ENCODE measurements at regions of chrX and their contacts with region 1.

Region 1: DNA sequence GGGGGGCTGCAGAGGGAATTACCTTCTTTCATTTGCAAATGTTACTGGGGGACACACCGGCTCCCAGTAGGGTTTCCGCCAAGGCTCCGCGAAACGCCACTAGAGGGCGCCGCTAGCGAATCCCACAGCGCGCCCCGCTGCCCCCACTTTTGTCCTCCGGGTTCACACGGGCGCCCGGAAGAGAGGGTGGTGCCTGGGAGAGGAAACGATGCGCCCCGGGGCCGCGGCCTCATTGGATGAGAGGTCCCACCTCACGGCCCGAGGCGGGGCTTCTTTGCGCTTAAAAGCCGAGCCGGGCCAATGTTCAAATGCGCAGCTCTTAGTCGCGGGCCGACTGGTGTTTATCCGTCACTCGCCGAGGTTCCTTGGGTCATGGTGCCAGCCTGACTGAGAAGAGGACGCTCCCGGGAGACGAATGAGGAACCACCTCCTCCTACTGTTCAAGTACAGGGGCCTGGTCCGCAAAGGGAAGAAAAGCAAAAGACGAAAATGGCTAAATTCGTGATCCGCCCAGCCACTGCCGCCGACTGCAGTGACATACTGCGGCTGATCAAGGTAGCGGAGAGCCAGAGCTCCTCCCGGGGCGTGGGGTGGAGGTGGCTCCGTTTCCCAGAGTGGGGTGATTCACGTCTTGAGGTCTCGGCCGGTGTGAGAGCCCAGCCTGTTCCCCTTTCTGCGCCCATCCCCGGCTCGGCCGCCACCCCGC is at the start of gene SAT1:
- DNase-seq: peak; percentile 94 to 95
- H3K4me3 ChIP-seq: peak within 1 kb of the TSS; percentile 80
- H3K4me3 Mint-ChIP-seq: peak within 1 kb of the TSS; percentile 92
- H3K27ac Mint-ChIP-seq: peak within 1 kb of the TSS; percentile 83
- H3K4me1 ChIP-seq: peaks cover 4% of the 10 kb centered on the region; the same call in 1 of the 2 replicates
- H3K4me1 Mint-ChIP-seq: no peaks in the 10 kb centered on the region
- H3K27me3 ChIP-seq: no peaks in the 10 kb centered on the region
- H3K27me3 Mint-ChIP-seq: no peaks in the 10 kb centered on the region
- CTCF ChIP-seq: peak; percentile 69 to 76
- total RNA-seq, gene SAT1: 151 and 155 TPM in 2 replicates

Region 2: DNA sequence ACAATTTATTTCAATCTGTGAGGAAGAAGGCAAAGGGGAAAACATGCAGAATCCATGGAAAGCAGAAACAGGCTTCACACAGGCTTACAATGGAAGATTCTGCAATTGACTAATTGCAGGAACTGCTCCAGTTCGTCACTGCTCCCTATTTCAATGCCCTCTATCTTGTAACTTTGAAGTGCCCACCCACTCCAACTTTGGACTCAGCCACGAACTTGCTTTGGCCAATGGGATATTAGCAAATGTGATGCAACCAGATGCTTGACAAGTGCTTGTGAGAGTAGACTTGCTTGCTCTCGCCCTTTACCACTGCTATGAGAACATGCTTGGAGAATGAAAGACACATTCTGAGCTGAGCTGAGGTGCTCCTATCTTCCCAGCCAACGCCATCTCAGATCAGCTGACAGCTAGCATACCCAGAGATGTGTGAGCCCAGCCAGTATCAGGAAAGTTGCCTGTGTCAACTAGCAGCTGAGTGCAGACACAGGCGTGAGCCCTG is 554.0 kb before region 1 on chrX:
- CTCF ChIA-PET with region 1: no interaction called
- POLR2A ChIA-PET with region 1: no interaction called
- intact Hi-C with region 1: no loop called
- DNase-seq: no peak
- H3K4me3 ChIP-seq: no peak overlapping the region
- H3K4me3 Mint-ChIP-seq: no peak overlapping the region
- H3K27ac Mint-ChIP-seq: no peak overlapping the region
- H3K4me1 ChIP-seq: no peaks in the 10 kb centered on the region
- H3K4me1 Mint-ChIP-seq: no peaks in the 10 kb centered on the region
- H3K27me3 ChIP-seq: no peaks in the 10 kb centered on the region
- H3K27me3 Mint-ChIP-seq: peaks cover 8% of the 10 kb centered on the region
- CTCF ChIP-seq: no peak

Region 3: GRCh38 chrX:23694606-23695005 is 88.4 kb before region 1 on chrX:
- CTCF ChIA-PET with region 1: interaction called, 3 read pairs
- POLR2A ChIA-PET with region 1: interaction called, 4 read pairs
- intact Hi-C with region 1: loop called (anchors 2 kb)
- DNase-seq: peak; percentile 35 to 41
- H3K4me3 ChIP-seq: no peak overlapping the region
- H3K4me3 Mint-ChIP-seq: no peak overlapping the region
- H3K27ac Mint-ChIP-seq: no peak overlapping the region
- H3K4me1 ChIP-seq: no peaks in the 10 kb centered on the region
- H3K4me1 Mint-ChIP-seq: no peaks in the 10 kb centered on the region
- H3K27me3 ChIP-seq: no peaks in the 10 kb centered on the region
- H3K27me3 Mint-ChIP-seq: no peaks in the 10 kb centered on the region
- CTCF ChIP-seq: peak; percentile 45 to 54

Region 4: GRCh38 chrX:23736030-23736429 is 47.0 kb before region 1 on chrX:
- CTCF ChIA-PET with region 1: no interaction called
- POLR2A ChIA-PET with region 1: no interaction called
- intact Hi-C with region 1: no loop called
- DNase-seq: no peak
- H3K4me3 ChIP-seq: no peak overlapping the region
- H3K4me3 Mint-ChIP-seq: no peak overlapping the region
- H3K27ac Mint-ChIP-seq: no peak overlapping the region
- H3K4me1 ChIP-seq: no peaks in the 10 kb centered on the region
- H3K4me1 Mint-ChIP-seq: no peaks in the 10 kb centered on the region
- H3K27me3 ChIP-seq: no peaks in the 10 kb centered on the region
- H3K27me3 Mint-ChIP-seq: no peaks in the 10 kb centered on the region
- CTCF ChIP-seq: no peak

Region 5: DNA sequence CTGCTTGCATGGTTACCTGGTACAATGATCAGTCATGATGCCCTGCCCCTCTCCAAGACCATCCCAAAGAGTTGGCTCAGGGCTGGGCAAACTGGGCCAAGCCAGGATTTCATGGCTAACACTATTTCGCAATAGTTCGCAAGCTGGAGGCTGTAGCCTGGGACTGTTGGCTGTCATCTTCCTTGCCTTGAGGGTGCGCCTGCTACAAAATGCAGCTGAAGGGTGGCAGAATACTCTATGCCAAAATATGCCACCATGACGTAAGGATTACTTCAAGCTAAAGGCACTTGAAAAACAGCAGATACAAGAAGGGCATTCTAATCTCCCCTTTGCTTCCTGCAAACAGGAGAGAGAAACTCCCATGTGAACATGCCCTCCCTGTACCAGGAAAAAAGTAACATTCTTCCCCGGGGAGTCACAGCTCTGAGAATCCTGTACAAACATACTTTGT is 20.9 kb after region 1 on chrX:
- CTCF ChIA-PET with region 1: interaction called, 7 read pairs
- POLR2A ChIA-PET with region 1: interaction called, 32 read pairs
- intact Hi-C with region 1: loop called (anchors 1 kb)
- DNase-seq: peak; percentile 47 to 48
- H3K4me3 ChIP-seq: no peak overlapping the region
- H3K4me3 Mint-ChIP-seq: peak overlapping the region; percentile 38
- H3K27ac Mint-ChIP-seq: peak overlapping the region; percentile 90
- H3K4me1 ChIP-seq: peaks cover 27% of the 10 kb centered on the region
- H3K4me1 Mint-ChIP-seq: peaks cover 28% of the 10 kb centered on the region
- H3K27me3 ChIP-seq: no peaks in the 10 kb centered on the region
- H3K27me3 Mint-ChIP-seq: no peaks in the 10 kb centered on the region
- CTCF ChIP-seq: no peak

Region 6: GRCh38 chrX:23844502-23845138 is 61.6 kb after region 1 on chrX:
- CTCF ChIA-PET with region 1: no interaction called
- POLR2A ChIA-PET with region 1: interaction called, 3 read pairs
- intact Hi-C with region 1: loop called (anchors 1 kb)
- DNase-seq: peak; percentile 52 to 57
- H3K4me3 ChIP-seq: no peak overlapping the region
- H3K4me3 Mint-ChIP-seq: peak overlapping the region; percentile 66
- H3K27ac Mint-ChIP-seq: peak overlapping the region; percentile 85
- H3K4me1 ChIP-seq: peaks cover 17% of the 10 kb centered on the region
- H3K4me1 Mint-ChIP-seq: peaks cover 6% of the 10 kb centered on the region
- H3K27me3 ChIP-seq: no peaks in the 10 kb centered on the region
- H3K27me3 Mint-ChIP-seq: no peaks in the 10 kb centered on the region
- CTCF ChIP-seq: no peak

Region 7: GRCh38 chrX:23854945-23855344 is 71.9 kb after region 1 on chrX:
- CTCF ChIA-PET with region 1: no interaction called
- POLR2A ChIA-PET with region 1: interaction called, 3 read pairs
- intact Hi-C with region 1: loop called (anchors 5 kb)
- DNase-seq: no peak
- H3K4me3 ChIP-seq: no peak overlapping the region
- H3K4me3 Mint-ChIP-seq: no peak overlapping the region
- H3K27ac Mint-ChIP-seq: no peak overlapping the region
- H3K4me1 ChIP-seq: peaks cover 5% of the 10 kb centered on the region; the same call in 1 of the 2 replicates
- H3K4me1 Mint-ChIP-seq: no peaks in the 10 kb centered on the region
- H3K27me3 ChIP-seq: no peaks in the 10 kb centered on the region
- H3K27me3 Mint-ChIP-seq: no peaks in the 10 kb centered on the region
- CTCF ChIP-seq: no peak

Measured in Caco-2 (cell line).